Activated CD4-positive, alpha-beta memory T cell treated with anti-CD3 and anti-CD28 coated beads for 36 hours (primary cell): ENCODE measurements at regions of chr9 and their contacts with region 1.

Region 1: GRCh38 chr9:121322037-121322775 is 47.8 kb downstream of the STOM start:
- DNase-seq: no peak
- H3K4me3 Mint-ChIP-seq: no peak overlapping the region
- H3K27ac Mint-ChIP-seq: no peak overlapping the region
- H3K4me1 Mint-ChIP-seq: peaks cover 14% of the 10 kb centered on the region
- H3K27me3 Mint-ChIP-seq: no peaks in the 10 kb centered on the region

Region 2: DNA sequence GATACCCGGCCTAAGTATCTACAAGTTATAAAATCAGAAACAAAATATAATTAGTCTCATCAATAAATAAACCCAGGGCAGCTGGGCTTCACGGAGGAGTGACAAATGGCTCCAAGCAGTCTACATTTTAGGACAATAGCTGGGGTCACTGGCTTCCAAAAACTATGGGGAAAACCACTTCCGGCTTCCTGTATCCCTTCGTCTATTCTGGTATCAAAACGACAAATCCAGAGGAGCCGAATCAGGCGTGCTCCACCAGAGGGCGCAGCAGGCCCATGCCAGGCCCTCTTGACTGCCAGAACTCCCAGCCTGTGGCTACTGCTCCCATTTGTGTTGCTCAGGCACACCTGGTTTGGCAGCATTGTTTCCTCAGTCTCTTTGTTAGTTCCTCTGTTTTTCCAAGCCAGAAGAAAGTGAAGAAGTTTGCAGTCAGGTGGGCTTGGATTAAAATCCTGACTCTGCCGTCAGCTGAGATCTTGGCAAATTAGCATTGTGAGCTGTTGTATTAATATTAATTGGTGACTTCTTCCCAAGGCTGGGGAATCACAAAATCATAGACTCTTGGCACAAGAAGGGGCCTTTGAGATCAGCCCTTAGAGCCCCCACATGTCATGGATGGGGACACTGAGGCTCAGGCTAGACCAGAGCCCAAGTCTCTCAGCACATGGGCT is 108.9 kb before region 1 on chr9:
- CTCF ChIA-PET with region 1: interaction called, 39 read pairs
- POLR2A ChIA-PET with region 1: no interaction called
- intact Hi-C with region 1: no loop called
- DNase-seq: peak; percentile 84
- H3K4me3 Mint-ChIP-seq: no peak overlapping the region
- H3K27ac Mint-ChIP-seq: no peak overlapping the region
- H3K4me1 Mint-ChIP-seq: peaks cover 5% of the 10 kb centered on the region
- H3K27me3 Mint-ChIP-seq: no peaks in the 10 kb centered on the region

Region 3: DNA sequence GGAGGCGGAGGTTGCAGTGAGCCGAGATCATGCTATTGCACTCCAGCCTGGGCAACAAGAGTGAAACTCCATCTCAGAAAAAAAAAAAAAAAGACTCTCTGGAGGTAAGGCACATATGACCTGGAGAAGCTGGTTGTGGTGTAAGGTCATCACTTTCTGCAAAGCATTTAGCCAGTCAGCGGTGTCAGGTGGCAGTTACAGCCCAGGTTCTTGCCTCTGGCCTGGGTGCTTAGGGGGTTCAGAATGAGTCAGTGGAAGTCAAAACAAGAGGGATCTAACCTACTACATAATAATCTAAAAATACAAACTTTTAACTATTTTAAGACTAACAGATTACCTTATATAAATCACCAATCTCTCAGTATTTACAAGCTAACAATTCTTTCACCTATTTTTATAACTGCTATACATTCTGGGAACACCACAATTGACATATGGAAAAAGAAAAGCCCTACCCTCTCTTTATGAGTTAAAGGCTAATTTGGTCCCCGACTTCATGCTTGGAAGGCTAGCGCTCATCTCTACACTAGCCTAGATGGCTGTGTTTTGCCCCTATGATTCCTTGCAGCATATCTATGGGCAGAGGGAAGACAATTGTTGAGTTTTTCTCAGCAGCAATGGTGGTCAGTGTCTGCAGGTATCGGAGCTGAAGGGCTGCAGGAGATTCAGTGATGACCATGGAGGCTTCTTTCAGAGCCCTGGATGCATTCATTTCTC is 18.6 kb after region 1 on chr9:
- CTCF ChIA-PET with region 1: interaction called, 46 read pairs
- POLR2A ChIA-PET with region 1: no interaction called
- intact Hi-C with region 1: no loop called
- DNase-seq: peak; percentile 20
- H3K4me3 Mint-ChIP-seq: no peak overlapping the region
- H3K27ac Mint-ChIP-seq: no peak overlapping the region
- H3K4me1 Mint-ChIP-seq: peaks cover 8% of the 10 kb centered on the region
- H3K27me3 Mint-ChIP-seq: no peaks in the 10 kb centered on the region

Region 4: GRCh38 chr9:121362813-121363621 is 40.8 kb after region 1 on chr9:
- CTCF ChIA-PET with region 1: interaction called, 21 read pairs
- POLR2A ChIA-PET with region 1: no interaction called
- intact Hi-C with region 1: no loop called
- DNase-seq: no peak
- H3K4me3 Mint-ChIP-seq: no peak overlapping the region
- H3K27ac Mint-ChIP-seq: no peak overlapping the region
- H3K4me1 Mint-ChIP-seq: peaks cover 77% of the 10 kb centered on the region
- H3K27me3 Mint-ChIP-seq: no peaks in the 10 kb centered on the region

Region 5: DNA sequence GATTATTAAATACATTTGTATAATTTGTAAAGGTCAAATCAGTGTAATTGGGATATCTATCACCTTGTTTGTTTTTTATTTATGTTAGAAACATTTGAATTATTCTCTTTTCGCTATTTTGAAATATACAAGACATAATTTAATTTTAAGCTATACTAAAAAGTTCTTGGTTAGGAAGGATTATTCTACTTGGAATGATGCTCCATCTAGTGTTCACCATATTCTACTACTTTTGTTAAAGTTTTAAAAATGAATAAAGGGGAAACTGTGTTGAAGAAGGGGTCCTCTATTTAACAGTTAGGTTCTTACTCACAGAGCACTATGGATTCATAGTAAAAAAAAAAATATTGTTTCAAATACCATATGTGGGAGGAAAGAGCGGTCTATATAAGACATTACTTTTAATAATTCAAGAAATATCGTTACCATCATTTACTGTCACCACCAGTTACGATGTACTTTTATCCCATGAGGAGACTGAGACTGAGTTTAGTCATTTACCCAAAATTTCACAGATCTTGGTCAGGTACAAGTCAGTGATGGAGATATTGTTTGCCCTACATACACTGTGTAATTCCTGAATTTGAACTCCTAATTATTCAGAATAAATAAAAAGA is 54.1 kb after region 1 on chr9:
- CTCF ChIA-PET with region 1: interaction called, 88 read pairs
- POLR2A ChIA-PET with region 1: no interaction called
- intact Hi-C with region 1: loop called (anchors 1 kb)
- DNase-seq: no peak
- H3K4me3 Mint-ChIP-seq: no peak overlapping the region
- H3K27ac Mint-ChIP-seq: no peak overlapping the region
- H3K4me1 Mint-ChIP-seq: peaks cover 14% of the 10 kb centered on the region
- H3K27me3 Mint-ChIP-seq: no peaks in the 10 kb centered on the region

Region 6: GRCh38 chr9:121498150-121498486 is 175.9 kb after region 1 on chr9:
- CTCF ChIA-PET with region 1: interaction called, 7 read pairs
- POLR2A ChIA-PET with region 1: no interaction called
- intact Hi-C with region 1: loop called (anchors 1 kb)
- DNase-seq: peak; percentile 55
- H3K4me3 Mint-ChIP-seq: peak overlapping the region; percentile 39
- H3K27ac Mint-ChIP-seq: no peak overlapping the region
- H3K4me1 Mint-ChIP-seq: peaks cover 17% of the 10 kb centered on the region
- H3K27me3 Mint-ChIP-seq: peaks cover 47% of the 10 kb centered on the region

Region 7: GRCh38 chr9:121707477-121708424 is 385.5 kb after region 1 on chr9:
- CTCF ChIA-PET with region 1: no interaction called
- POLR2A ChIA-PET with region 1: no interaction called
- intact Hi-C with region 1: no loop called
- DNase-seq: peak; percentile 19
- H3K4me3 Mint-ChIP-seq: no peak overlapping the region
- H3K27ac Mint-ChIP-seq: no peak overlapping the region
- H3K4me1 Mint-ChIP-seq: no peaks in the 10 kb centered on the region
- H3K27me3 Mint-ChIP-seq: peaks cover 5% of the 10 kb centered on the region